Activated naive CD4-positive, alpha-beta T cell treated with anti-CD3 and anti-CD28 coated beads, Interleukin-2, amount 10 ng/mL, durations not matched to agents 7 days and 5 days (primary cell): ENCODE measurements at regions of chr2 and their contacts with region 1.

Region 1: GRCh38 chr2:98445177-98445647 is 554 bp downstream of the INPP4A start:
- DNase-seq: peak; percentile 57
- H3K4me3 Mint-ChIP-seq: peak overlapping the region; percentile 91
- H3K27ac Mint-ChIP-seq: peak overlapping the region; percentile 89
- H3K4me1 Mint-ChIP-seq: peaks cover 48% of the 10 kb centered on the region
- H3K27me3 Mint-ChIP-seq: peaks cover 4% of the 10 kb centered on the region

Region 2: DNA sequence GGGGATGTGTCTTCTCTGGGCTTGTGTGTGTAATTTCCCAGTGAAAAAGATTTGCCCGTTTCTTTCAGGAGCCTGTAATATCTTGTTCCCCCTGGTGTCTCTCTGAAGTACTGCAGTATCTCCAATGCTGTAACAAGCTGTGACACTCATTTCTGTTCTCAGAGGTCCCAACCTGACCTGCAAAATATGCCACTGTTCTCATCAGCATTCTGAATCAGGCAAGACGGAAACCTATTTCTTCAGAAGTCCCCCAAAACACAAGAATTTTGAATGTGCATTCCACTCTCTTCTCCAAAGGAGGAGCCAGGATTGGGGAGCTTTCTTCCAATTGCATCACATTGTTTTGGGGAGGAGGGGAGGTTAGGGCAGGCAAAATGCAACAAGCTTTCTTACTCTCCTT is 175.9 kb before region 1 on chr2:
- CTCF ChIA-PET with region 1: no interaction called
- DNase-seq: no peak
- H3K4me3 Mint-ChIP-seq: no peak overlapping the region
- H3K27ac Mint-ChIP-seq: no peak overlapping the region
- H3K4me1 Mint-ChIP-seq: no peaks in the 10 kb centered on the region
- H3K27me3 Mint-ChIP-seq: peaks cover 12% of the 10 kb centered on the region

Region 3: GRCh38 chr2:98455494-98455976 is 10.3 kb after region 1 on chr2:
- CTCF ChIA-PET with region 1: interaction called, 10 read pairs
- DNase-seq: peak; percentile 59
- H3K4me3 Mint-ChIP-seq: peak overlapping the region; percentile 51
- H3K27ac Mint-ChIP-seq: peak overlapping the region; percentile 86
- H3K4me1 Mint-ChIP-seq: peaks cover 96% of the 10 kb centered on the region
- H3K27me3 Mint-ChIP-seq: no peaks in the 10 kb centered on the region

Region 4: DNA sequence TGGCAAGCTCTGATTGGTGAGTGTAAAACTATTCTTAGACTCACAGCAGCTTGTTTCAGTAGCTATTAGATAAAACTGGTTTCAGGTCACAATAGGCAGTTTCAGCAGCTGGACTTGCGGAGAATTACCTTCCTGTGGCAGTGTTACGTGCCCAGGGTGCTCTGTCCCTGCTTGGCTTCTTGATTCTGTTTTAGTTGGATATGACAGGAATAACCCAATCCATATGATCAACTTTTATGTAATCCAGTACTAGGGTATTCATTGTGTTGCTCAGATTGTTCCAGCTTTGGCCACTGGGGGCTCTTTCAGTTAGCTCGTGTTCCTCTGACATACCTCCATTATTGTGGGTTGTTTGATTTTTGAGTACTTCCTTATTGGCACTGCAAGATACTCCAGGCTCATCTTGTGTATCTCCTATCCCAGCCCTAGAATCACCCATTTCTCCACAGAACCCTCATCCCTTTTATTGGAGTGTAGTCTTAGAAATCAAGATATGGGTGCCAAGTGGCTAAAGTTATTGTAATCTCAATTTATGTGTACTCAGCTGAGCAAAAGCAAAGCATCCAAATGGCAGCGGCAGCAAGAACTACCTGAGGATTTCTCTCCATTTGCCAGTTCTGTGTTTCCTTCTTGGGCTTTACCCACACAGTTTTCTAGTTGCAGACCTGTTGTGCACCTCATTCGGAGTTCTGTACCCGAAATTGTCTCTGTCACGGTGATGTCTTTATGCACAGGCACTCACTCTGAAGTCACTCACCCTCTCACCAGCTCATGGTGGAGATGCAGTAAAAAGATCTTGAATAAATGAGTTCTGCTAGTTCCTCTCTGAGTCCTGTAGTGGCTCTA is 42.8 kb after region 1 on chr2:
- CTCF ChIA-PET with region 1: interaction called, 18 read pairs
- DNase-seq: peak; percentile 67
- H3K4me3 Mint-ChIP-seq: no peak overlapping the region
- H3K27ac Mint-ChIP-seq: peak overlapping the region; percentile 70
- H3K4me1 Mint-ChIP-seq: peaks cover 89% of the 10 kb centered on the region
- H3K27me3 Mint-ChIP-seq: no peaks in the 10 kb centered on the region